Psoas muscle (tissue), 8 donors: ENCODE measurements at regions of chr1 and their contacts with region 1.

Region 1: GRCh38 chr1:21931171-21932093 is 5.7 kb downstream of the HSPG2 start:
- DNase-seq: peak; percentile 83 to 86
- ATAC-seq: peak; percentile 44 to 66 (median 62)
- H3K4me3 ChIP-seq: peak overlapping the region; percentile 31
- H3K27ac ChIP-seq: peak overlapping the region; percentile 82
- H3K4me1 ChIP-seq: peaks cover 51% of the 10 kb centered on the region
- H3K27me3 ChIP-seq: no peaks in the 10 kb centered on the region
- CTCF ChIP-seq: no peak

Region 2: DNA sequence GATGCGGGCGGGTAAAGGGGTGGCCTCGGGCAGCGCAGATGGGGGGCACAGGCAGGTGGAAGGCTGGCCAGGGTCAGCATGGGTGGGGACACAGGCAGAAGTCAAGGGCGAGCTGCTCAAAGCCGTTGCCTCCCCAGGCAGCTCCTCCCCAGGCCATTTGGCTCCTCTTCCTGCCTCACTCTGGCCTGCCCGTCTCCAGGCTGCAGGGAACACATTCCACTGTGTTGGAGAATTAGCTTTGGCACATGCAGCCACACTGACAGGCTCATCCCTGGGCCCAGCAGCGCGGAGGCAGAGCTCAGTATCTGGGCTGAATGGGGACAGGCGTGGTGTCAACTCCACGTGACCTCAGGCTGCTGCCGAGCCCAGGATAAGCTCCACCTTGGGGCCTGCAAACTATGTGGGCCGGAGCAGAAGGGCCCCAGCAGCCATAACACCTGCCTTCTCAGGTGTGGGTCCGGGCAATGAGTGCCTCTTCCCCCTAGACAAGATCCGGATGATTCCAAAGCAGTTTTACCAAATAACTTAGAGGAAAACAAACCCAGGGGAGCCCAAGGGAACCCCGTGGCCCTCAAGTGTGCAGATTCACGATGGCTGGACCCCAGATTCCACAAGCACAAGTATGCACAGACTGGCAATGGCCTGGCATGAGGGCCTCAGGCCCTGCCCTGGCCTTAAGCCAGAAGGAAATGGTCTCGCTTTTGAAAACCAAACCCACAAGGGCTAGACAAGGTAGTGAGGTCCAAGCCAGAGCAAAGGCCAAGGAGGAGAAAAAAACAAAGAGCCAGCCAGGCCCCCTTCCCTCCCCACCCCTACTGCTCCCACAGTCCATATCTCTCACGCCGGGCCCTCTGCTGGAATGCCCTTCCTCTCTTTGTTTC is 34.5 kb before region 1 on chr1:
- intact Hi-C with region 1: loop called (anchors 5 kb)
- DNase-seq: peak; percentile 87 to 93
- ATAC-seq: peak; percentile 75 to 85 (median 78)
- H3K4me3 ChIP-seq: no peak overlapping the region
- H3K27ac ChIP-seq: peak overlapping the region; percentile 53
- H3K4me1 ChIP-seq: peaks cover 65% of the 10 kb centered on the region
- H3K27me3 ChIP-seq: no peaks in the 10 kb centered on the region
- CTCF ChIP-seq: no peak

Region 3: GRCh38 chr1:21914880-21915640 is 16.4 kb before region 1 on chr1:
- intact Hi-C with region 1: loop called in 1 of 2 experiments (anchors 2 kb)
- DNase-seq: peak in 1 of 2 donors; percentile 44
- ATAC-seq: no peak
- H3K4me3 ChIP-seq: no peak overlapping the region
- H3K27ac ChIP-seq: peak overlapping the region; percentile 87
- H3K4me1 ChIP-seq: peaks cover 60% of the 10 kb centered on the region
- H3K27me3 ChIP-seq: peaks cover 0 to 2% (median 0%) of the 10 kb centered on the region in 3 donors
- CTCF ChIP-seq: no peak

Region 4: GRCh38 chr1:22289307-22289995 is 358.0 kb after region 1 on chr1:
- intact Hi-C with region 1: no loop called
- DNase-seq: no peak
- ATAC-seq: no peak
- H3K4me3 ChIP-seq: no peak overlapping the region
- H3K27ac ChIP-seq: no peak overlapping the region
- H3K4me1 ChIP-seq: no peaks in the 10 kb centered on the region
- H3K27me3 ChIP-seq: peaks cover 0 to 35% (median 5%) of the 10 kb centered on the region in 3 donors
- CTCF ChIP-seq: no peak